ENCODE measurements at regions of chr1 and their contacts with region 1.

Region 1: GRCh38 chr1:231357831-231358354 is 19.8 kb downstream of the SPRTN start:
- DNase-seq: peak; percentile 21
- ATAC-seq: peak; percentile 97
- H3K4me3 ChIP-seq: no peak overlapping the region
- H3K27ac ChIP-seq: no peak overlapping the region
- H3K4me1 ChIP-seq: no peaks in the 10 kb centered on the region
- H3K27me3 ChIP-seq: no peaks in the 10 kb centered on the region
- CTCF ChIP-seq: peak; percentile 66 to 87 (median 77); a peak in 5 of 6 replicates
- EP300 ChIP-seq: no peak
- POLR2A ChIP-seq: no peak
- RAD21 ChIP-seq: peak; percentile 95

Region 2: GRCh38 chr1:231295938-231296337 is 62.0 kb before region 1 on chr1:
- CTCF ChIA-PET with region 1: no interaction called
- POLR2A ChIA-PET with region 1: no interaction called
- RAD21 ChIA-PET with region 1: no interaction called
- SMC1A ChIA-PET with region 1: no interaction called
- in situ Hi-C with region 1: no loop called
- intact Hi-C with region 1: no loop called
- DNase-seq: no peak
- ATAC-seq: no peak
- H3K4me3 ChIP-seq: no peak overlapping the region
- H3K27ac ChIP-seq: no peak overlapping the region
- H3K4me1 ChIP-seq: no peaks in the 10 kb centered on the region
- H3K27me3 ChIP-seq: no peaks in the 10 kb centered on the region
- CTCF ChIP-seq: no peak
- EP300 ChIP-seq: no peak
- POLR2A ChIP-seq: no peak
- RAD21 ChIP-seq: no peak

Region 3: DNA sequence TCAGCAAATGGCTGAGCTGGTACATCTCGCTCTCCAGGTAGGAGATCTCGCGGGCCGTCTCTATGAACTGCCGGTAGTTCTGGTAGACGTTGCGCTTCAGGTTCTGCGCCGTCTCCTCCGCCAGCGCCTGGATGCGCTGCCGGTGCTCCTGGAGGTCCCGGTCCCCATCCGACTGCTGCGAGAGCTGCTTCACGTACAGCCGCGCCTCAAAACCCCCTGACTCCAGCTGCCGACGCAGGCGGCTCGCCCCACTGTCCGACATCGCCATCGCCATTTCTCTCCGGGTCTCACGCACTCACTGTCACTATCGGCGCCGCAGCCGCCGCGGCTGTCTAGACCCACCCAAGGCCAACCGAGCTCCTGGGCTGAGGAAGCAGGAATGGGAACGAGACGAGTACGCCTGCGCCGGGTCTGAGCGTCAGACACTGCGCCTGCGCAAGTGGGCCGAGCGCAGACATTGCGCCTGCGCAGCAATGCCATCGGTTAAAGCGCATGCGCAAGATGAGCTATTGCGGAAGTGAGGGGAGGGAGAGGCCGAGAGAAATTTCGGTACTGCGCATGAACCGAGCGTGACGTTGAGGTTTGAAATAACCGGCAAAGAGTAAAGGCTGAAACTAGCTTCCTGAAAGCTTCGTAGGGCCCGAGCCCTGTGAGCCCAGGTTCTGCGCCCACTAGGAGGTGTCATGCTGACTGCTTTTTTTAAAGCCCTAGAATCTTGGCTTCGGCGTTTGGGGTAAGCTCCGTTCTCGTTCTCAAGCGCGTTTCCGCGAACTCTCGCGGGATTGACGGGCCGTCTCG is 20.2 kb before region 1 on chr1 and contains the start of gene EXOC8:
- CTCF ChIA-PET with region 1: interaction called, 15 read pairs
- POLR2A ChIA-PET with region 1: interaction called, 9 read pairs
- RAD21 ChIA-PET with region 1: interaction called, 6 read pairs
- SMC1A ChIA-PET with region 1: interaction called, 7 read pairs
- in situ Hi-C with region 1: no loop called
- intact Hi-C with region 1: no loop called
- DNase-seq: peak; percentile 99
- ATAC-seq: peak; percentile 84
- H3K4me3 ChIP-seq: peak within 1 kb of the TSS; percentile 91
- H3K27ac ChIP-seq: peak within 1 kb of the TSS; percentile 95
- H3K4me1 ChIP-seq: peaks cover 8% of the 10 kb centered on the region
- H3K27me3 ChIP-seq: no peaks in the 10 kb centered on the region
- CTCF ChIP-seq: peak; percentile 3 to 29 (median 10); a peak in 2 of 6 replicates
- EP300 ChIP-seq: no peak
- POLR2A ChIP-seq: peak; percentile 88
- RAD21 ChIP-seq: no peak
- polyA plus RNA-seq, gene EXOC8: 2.0 to 3.2 TPM

Region 4: DNA sequence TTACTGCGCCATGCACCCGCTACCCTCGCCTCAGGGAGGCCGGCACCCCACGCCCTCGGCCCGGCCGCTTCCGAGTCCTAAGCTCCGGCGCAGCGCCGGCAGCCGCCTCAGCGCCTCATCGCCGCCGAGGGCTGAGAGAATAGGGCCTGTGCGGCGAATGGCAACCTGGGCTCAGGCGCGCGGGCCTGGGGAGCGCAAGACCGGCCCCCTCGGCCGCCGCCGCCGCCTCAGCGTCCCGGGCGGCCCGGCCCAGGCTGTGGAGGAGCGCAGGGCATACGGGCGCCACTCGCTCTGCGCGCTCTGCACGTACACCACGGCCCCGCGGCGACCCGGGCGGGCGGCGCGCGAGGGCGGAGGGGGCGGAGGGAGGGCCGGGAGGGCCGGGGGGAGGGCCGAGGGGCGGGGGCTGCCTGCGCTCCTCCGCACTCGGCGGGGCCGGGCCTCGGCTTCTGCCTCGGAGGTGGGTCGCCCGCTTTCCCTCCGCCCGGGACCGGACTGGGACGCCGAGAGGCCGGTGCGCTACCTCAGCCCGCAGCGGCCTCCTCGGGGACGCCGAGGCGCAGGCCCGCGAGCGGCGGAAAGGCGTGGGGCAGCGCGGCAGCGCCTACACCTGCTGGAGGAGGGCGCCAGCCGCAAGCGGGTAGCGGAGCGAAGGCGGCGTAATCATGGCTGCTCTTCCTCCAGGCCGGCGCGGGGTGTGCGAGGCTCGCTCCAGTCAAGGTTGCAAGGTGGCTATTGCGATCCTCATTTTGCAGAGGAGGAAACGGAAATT is 64.3 kb after region 1 on chr1 and contains the start of gene EGLN1:
- CTCF ChIA-PET with region 1: interaction called, 5 read pairs
- POLR2A ChIA-PET with region 1: no interaction called
- RAD21 ChIA-PET with region 1: interaction called, 3 read pairs
- SMC1A ChIA-PET with region 1: interaction called, 5 read pairs
- in situ Hi-C with region 1: no loop called
- intact Hi-C with region 1: loop called (anchors 5 kb)
- DNase-seq: peak; percentile 48
- ATAC-seq: peak; percentile 87
- H3K4me3 ChIP-seq: peak within 1 kb of the TSS; percentile 92
- H3K27ac ChIP-seq: peak within 1 kb of the TSS; percentile 81
- H3K4me1 ChIP-seq: no peaks in the 10 kb centered on the region
- H3K27me3 ChIP-seq: no peaks in the 10 kb centered on the region; a peak in 1 of 4 replicates
- CTCF ChIP-seq: peak; percentile 35 to 61 (median 49); a peak in 4 of 6 replicates
- EP300 ChIP-seq: no peak; a peak in 1 of 4 replicates
- POLR2A ChIP-seq: peak; percentile 88
- RAD21 ChIP-seq: peak; percentile 57
- polyA plus RNA-seq, gene EGLN1: 2.4 to 3.0 TPM

Region 5: GRCh38 chr1:231534703-231535159 is 176.8 kb after region 1 on chr1:
- CTCF ChIA-PET with region 1: interaction called, 4 read pairs
- POLR2A ChIA-PET with region 1: no interaction called
- RAD21 ChIA-PET with region 1: no interaction called
- SMC1A ChIA-PET with region 1: interaction called, 10 read pairs
- in situ Hi-C with region 1: no loop called
- intact Hi-C with region 1: no loop called
- DNase-seq: no peak
- ATAC-seq: no peak
- H3K4me3 ChIP-seq: no peak overlapping the region
- H3K27ac ChIP-seq: no peak overlapping the region
- H3K4me1 ChIP-seq: no peaks in the 10 kb centered on the region
- H3K27me3 ChIP-seq: no peaks in the 10 kb centered on the region
- CTCF ChIP-seq: no peak
- EP300 ChIP-seq: no peak
- POLR2A ChIP-seq: no peak
- RAD21 ChIP-seq: no peak

Region 6: DNA sequence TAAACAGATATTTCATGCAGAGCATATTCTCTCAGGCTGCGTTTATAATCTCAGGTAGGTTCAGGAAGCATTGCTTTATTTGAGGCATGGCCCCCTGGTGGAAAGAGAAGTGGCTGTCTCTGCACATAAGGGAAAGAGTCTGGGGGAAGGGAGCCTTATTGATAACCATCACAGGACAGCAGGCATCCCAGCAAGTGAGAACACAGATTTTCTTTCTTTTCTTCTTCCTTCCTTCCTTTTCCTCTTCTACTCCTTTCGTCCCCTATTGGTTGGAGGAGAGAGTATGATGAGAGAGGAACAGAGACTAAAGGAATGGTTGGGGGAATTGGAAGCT is 192.5 kb after region 1 on chr1:
- CTCF ChIA-PET with region 1: interaction called, 4 read pairs
- POLR2A ChIA-PET with region 1: interaction called, 3 read pairs
- RAD21 ChIA-PET with region 1: interaction called, 4 read pairs
- SMC1A ChIA-PET with region 1: interaction called, 4 read pairs
- in situ Hi-C with region 1: no loop called
- intact Hi-C with region 1: loop called (anchors 1 kb)
- DNase-seq: no peak
- ATAC-seq: peak; percentile 86
- H3K4me3 ChIP-seq: no peak overlapping the region
- H3K27ac ChIP-seq: no peak overlapping the region
- H3K4me1 ChIP-seq: no peaks in the 10 kb centered on the region
- H3K27me3 ChIP-seq: no peaks in the 10 kb centered on the region
- CTCF ChIP-seq: peak; percentile 45 to 51 (median 51); a peak in 5 of 6 replicates
- EP300 ChIP-seq: no peak
- POLR2A ChIP-seq: no peak
- RAD21 ChIP-seq: peak; percentile 65

Region 7: DNA sequence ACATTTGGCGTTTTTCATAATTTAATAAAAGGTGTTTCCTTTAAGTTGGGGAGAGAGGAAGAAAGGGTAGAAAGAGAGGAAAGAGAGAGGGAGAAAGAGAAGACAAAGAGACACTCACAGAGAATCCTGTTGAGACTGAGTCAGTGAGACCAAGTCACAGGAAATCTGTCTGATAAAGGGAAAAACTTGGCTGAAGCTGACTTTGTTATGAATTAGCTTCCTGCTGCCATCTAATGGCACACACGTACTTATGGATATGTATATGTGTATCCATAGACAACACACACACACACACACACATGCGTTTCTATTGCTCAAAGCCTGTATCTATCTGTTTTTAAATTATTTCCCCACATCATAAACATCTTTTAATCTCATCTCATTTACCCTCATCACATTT is 226.2 kb after region 1 on chr1:
- CTCF ChIA-PET with region 1: interaction called, 13 read pairs
- POLR2A ChIA-PET with region 1: no interaction called
- RAD21 ChIA-PET with region 1: interaction called, 7 read pairs
- SMC1A ChIA-PET with region 1: interaction called, 5 read pairs
- in situ Hi-C with region 1: loop called (anchors 5 kb)
- intact Hi-C with region 1: no loop called
- DNase-seq: no peak
- ATAC-seq: peak; percentile 55; the same call in 1 of the 3 replicates
- H3K4me3 ChIP-seq: no peak overlapping the region
- H3K27ac ChIP-seq: no peak overlapping the region
- H3K4me1 ChIP-seq: no peaks in the 10 kb centered on the region
- H3K27me3 ChIP-seq: no peaks in the 10 kb centered on the region
- CTCF ChIP-seq: peak; percentile 8 to 61 (median 16); a peak in 2 of 6 replicates
- EP300 ChIP-seq: no peak
- POLR2A ChIP-seq: no peak
- RAD21 ChIP-seq: peak; percentile 41

Region 8: GRCh38 chr1:231590453-231591198 is 232.7 kb after region 1 on chr1:
- CTCF ChIA-PET with region 1: interaction called, 9 read pairs
- POLR2A ChIA-PET with region 1: no interaction called
- RAD21 ChIA-PET with region 1: interaction called, 4 read pairs
- SMC1A ChIA-PET with region 1: interaction called, 5 read pairs
- in situ Hi-C with region 1: loop called (anchors 5 kb)
- intact Hi-C with region 1: loop called (anchors 1 kb)
- DNase-seq: no peak
- ATAC-seq: peak; percentile 93
- H3K4me3 ChIP-seq: no peak overlapping the region
- H3K27ac ChIP-seq: no peak overlapping the region
- H3K4me1 ChIP-seq: no peaks in the 10 kb centered on the region
- H3K27me3 ChIP-seq: no peaks in the 10 kb centered on the region
- CTCF ChIP-seq: peak; percentile 74 to 88 (median 80)
- EP300 ChIP-seq: no peak
- POLR2A ChIP-seq: no peak
- RAD21 ChIP-seq: peak; percentile 84

Measured in GM12878 (cell line).